MCF 10A (cell line): ENCODE measurements at regions of chr2 and their contacts with region 1.

Region 1: GRCh38 chr2:71331581-71332434 is at the start of gene ZNF638:
- DNase-seq: peak; percentile 93
- H3K4me3 Mint-ChIP-seq: peak within 1 kb of the TSS; percentile 99
- H3K27ac Mint-ChIP-seq: peak within 1 kb of the TSS; percentile 100
- H3K4me1 Mint-ChIP-seq: peaks cover 14% of the 10 kb centered on the region
- H3K27me3 Mint-ChIP-seq: no peaks in the 10 kb centered on the region
- CTCF ChIP-seq: peak; percentile 73
- total RNA-seq, gene ZNF638: 112 and 142 TPM in 2 replicates

Region 2: DNA sequence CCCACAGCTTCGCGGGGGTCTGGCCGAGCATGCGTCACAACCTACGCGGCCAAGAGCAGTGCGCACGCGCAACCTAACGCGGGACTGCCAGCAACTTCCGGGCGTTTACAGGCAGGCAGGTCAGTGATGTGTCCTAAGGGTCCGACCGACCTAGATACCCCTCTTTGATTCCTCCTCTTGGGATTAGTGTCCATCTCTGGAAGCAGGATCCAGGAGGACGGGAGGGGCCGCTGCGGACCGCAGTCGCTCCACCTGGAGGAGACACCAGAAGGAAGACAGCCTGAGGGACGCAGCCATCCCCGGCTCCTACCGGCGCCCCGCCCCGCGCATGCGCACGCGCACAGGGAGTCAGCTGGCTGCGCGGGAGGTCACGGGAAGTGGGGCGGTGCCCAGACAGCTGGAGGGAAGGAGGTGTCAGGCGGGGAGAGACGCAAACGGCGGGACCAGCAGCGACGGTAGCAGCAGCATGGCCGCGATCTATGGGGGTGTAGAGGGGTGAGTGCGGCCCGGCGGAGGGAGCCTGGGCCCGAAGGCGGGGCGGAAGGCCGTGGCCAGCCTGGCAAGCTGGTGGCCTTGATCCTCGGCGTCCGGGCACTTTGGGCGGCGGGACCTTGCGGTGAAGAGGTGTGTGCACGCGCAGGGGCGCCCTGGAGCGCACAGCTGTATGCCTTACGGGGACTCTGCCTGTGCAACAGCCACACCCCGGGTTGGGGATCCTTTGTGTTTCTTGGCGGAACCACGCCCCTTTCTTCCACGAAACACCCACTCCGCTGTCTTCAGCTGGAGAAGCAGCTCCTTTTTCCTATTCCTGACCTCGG is 263.4 kb before region 1 on chr2 and contains the start of gene NAGK:
- CTCF ChIA-PET with region 1: interaction called, 7 read pairs
- POLR2A ChIA-PET with region 1: interaction called, 21 read pairs
- intact Hi-C with region 1: no loop called
- DNase-seq: peak; percentile 95
- H3K4me3 Mint-ChIP-seq: peak within 1 kb of the TSS; percentile 96
- H3K27ac Mint-ChIP-seq: peak within 1 kb of the TSS; percentile 93
- H3K4me1 Mint-ChIP-seq: peaks cover 22% of the 10 kb centered on the region
- H3K27me3 Mint-ChIP-seq: no peaks in the 10 kb centered on the region
- CTCF ChIP-seq: no peak
- total RNA-seq, gene NAGK: 30.9 and 45.7 TPM in 2 replicates

Region 3: GRCh38 chr2:71157124-71157793 is 174.5 kb before region 1 on chr2:
- CTCF ChIA-PET with region 1: interaction called, 12 read pairs
- POLR2A ChIA-PET with region 1: no interaction called
- intact Hi-C with region 1: no loop called
- DNase-seq: peak; percentile 60
- H3K4me3 Mint-ChIP-seq: peak overlapping the region; percentile 13
- H3K27ac Mint-ChIP-seq: no peak overlapping the region
- H3K4me1 Mint-ChIP-seq: peaks cover 16% of the 10 kb centered on the region
- H3K27me3 Mint-ChIP-seq: no peaks in the 10 kb centered on the region
- CTCF ChIP-seq: peak; percentile 70

Region 4: GRCh38 chr2:71226965-71227560 is 104.7 kb before region 1 on chr2 and contains the start of gene PAIP2B:
- CTCF ChIA-PET with region 1: interaction called, 13 read pairs
- POLR2A ChIA-PET with region 1: interaction called, 53 read pairs
- intact Hi-C with region 1: loop called (anchors 5 kb)
- DNase-seq: peak; percentile 99
- H3K4me3 Mint-ChIP-seq: peak within 1 kb of the TSS; percentile 93
- H3K27ac Mint-ChIP-seq: peak within 1 kb of the TSS; percentile 63
- H3K4me1 Mint-ChIP-seq: peaks cover 12% of the 10 kb centered on the region
- H3K27me3 Mint-ChIP-seq: peaks cover 12% of the 10 kb centered on the region
- CTCF ChIP-seq: no peak
- total RNA-seq, gene PAIP2B: 1.4 and 1.8 TPM in 2 replicates

Region 5: GRCh38 chr2:71299507-71299906 is 32.3 kb before region 1 on chr2:
- CTCF ChIA-PET with region 1: interaction called, 84 read pairs
- POLR2A ChIA-PET with region 1: interaction called, 36 read pairs
- intact Hi-C with region 1: loop called (anchors 1 kb)
- DNase-seq: peak; percentile 51
- H3K4me3 Mint-ChIP-seq: no peak overlapping the region
- H3K27ac Mint-ChIP-seq: no peak overlapping the region
- H3K4me1 Mint-ChIP-seq: peaks cover 9% of the 10 kb centered on the region
- H3K27me3 Mint-ChIP-seq: no peaks in the 10 kb centered on the region
- CTCF ChIP-seq: peak; percentile 64